ENCODE measurements at regions of chr1 and their contacts with region 1.

Region 1: GRCh38 chr1:47388891-47389238 is 27.2 kb upstream of the FOXE3 start:
- DNase-seq: peak; percentile 67 to 74
- H3K4me3 ChIP-seq: no peak overlapping the region
- H3K4me3 Mint-ChIP-seq: peak overlapping the region; percentile 15
- H3K27ac Mint-ChIP-seq: peak overlapping the region; percentile 69
- H3K4me1 ChIP-seq: peaks cover 48% of the 10 kb centered on the region
- H3K4me1 Mint-ChIP-seq: peaks cover 52% of the 10 kb centered on the region
- H3K27me3 ChIP-seq: no peaks in the 10 kb centered on the region
- H3K27me3 Mint-ChIP-seq: no peaks in the 10 kb centered on the region
- CTCF ChIP-seq: peak; percentile 70 to 74

Region 2: GRCh38 chr1:47231301-47232186 is 157.3 kb before region 1 on chr1:
- CTCF ChIA-PET with region 1: no interaction called
- POLR2A ChIA-PET with region 1: no interaction called
- intact Hi-C with region 1: no loop called
- DNase-seq: peak in 1 of 2 experiments; percentile 41
- H3K4me3 ChIP-seq: peak overlapping the region; percentile 73
- H3K4me3 Mint-ChIP-seq: peak overlapping the region; percentile 78
- H3K27ac Mint-ChIP-seq: peak overlapping the region; percentile 89
- H3K4me1 ChIP-seq: 0 out of 2 replicates have a peak, but pooled peaks cover 2% of the 10 kb centered on the region
- H3K4me1 Mint-ChIP-seq: peaks cover 8% of the 10 kb centered on the region
- H3K27me3 ChIP-seq: no peaks in the 10 kb centered on the region
- H3K27me3 Mint-ChIP-seq: no peaks in the 10 kb centered on the region
- CTCF ChIP-seq: no peak

Region 3: DNA sequence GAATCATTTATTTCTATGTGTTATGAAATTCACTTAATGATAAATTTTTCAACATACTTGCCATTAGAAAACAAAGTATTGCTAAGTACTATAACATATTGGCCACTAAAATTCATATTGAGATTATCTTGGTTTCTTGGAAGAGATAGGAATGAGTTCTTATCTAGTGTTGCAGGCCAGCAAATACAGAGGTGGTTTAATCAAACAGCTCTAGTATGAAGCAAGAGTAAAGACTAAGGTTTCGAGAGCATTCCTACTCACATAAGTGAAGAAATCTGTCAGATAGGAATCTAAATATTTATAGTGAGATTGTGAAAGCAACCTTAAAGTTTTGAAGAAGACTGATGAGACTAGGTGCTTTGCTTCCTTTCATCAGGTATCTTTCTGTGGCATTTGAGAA is 10.7 kb before region 1 on chr1:
- CTCF ChIA-PET with region 1: no interaction called
- POLR2A ChIA-PET with region 1: no interaction called
- intact Hi-C with region 1: loop called (anchors 1 kb)
- DNase-seq: peak in 1 of 2 experiments; percentile 50
- H3K4me3 ChIP-seq: no peak overlapping the region
- H3K4me3 Mint-ChIP-seq: peak overlapping the region; percentile 29
- H3K27ac Mint-ChIP-seq: no peak overlapping the region
- H3K4me1 ChIP-seq: peaks cover 49% of the 10 kb centered on the region
- H3K4me1 Mint-ChIP-seq: peaks cover 10% of the 10 kb centered on the region
- H3K27me3 ChIP-seq: no peaks in the 10 kb centered on the region
- H3K27me3 Mint-ChIP-seq: no peaks in the 10 kb centered on the region
- CTCF ChIP-seq: no peak

Region 4: GRCh38 chr1:47424336-47424982 is 35.6 kb after region 1 on chr1:
- CTCF ChIA-PET with region 1: interaction called, 8 read pairs
- POLR2A ChIA-PET with region 1: no interaction called
- intact Hi-C with region 1: loop called (anchors 1 kb)
- DNase-seq: peak; percentile 61 to 75
- H3K4me3 ChIP-seq: no peak overlapping the region
- H3K4me3 Mint-ChIP-seq: no peak overlapping the region
- H3K27ac Mint-ChIP-seq: no peak overlapping the region
- H3K4me1 ChIP-seq: no peaks in the 10 kb centered on the region
- H3K4me1 Mint-ChIP-seq: peaks cover 7% of the 10 kb centered on the region
- H3K27me3 ChIP-seq: no peaks in the 10 kb centered on the region
- H3K27me3 Mint-ChIP-seq: no peaks in the 10 kb centered on the region
- CTCF ChIP-seq: peak; percentile 80 to 83

Region 5: GRCh38 chr1:47725992-47726855 is 337.4 kb after region 1 on chr1:
- CTCF ChIA-PET with region 1: interaction called, 12 read pairs
- POLR2A ChIA-PET with region 1: no interaction called
- intact Hi-C with region 1: no loop called
- DNase-seq: peak; percentile 75 to 77
- H3K4me3 ChIP-seq: no peak overlapping the region
- H3K4me3 Mint-ChIP-seq: no peak overlapping the region
- H3K27ac Mint-ChIP-seq: no peak overlapping the region
- H3K4me1 ChIP-seq: peaks cover 24% of the 10 kb centered on the region
- H3K4me1 Mint-ChIP-seq: peaks cover 22% of the 10 kb centered on the region
- H3K27me3 ChIP-seq: no peaks in the 10 kb centered on the region
- H3K27me3 Mint-ChIP-seq: no peaks in the 10 kb centered on the region
- CTCF ChIP-seq: peak; percentile 71 to 79

Measured in Caco-2 (cell line).